Activated CD4-positive, alpha-beta T cell treated with anti-CD3 and anti-CD28 coated beads, Interleukin-2, amount 10 ng/mL, durations not matched to agents 24 days and 14 days (primary cell): ENCODE measurements at regions of chrX and their contacts with region 1.

Region 1: DNA sequence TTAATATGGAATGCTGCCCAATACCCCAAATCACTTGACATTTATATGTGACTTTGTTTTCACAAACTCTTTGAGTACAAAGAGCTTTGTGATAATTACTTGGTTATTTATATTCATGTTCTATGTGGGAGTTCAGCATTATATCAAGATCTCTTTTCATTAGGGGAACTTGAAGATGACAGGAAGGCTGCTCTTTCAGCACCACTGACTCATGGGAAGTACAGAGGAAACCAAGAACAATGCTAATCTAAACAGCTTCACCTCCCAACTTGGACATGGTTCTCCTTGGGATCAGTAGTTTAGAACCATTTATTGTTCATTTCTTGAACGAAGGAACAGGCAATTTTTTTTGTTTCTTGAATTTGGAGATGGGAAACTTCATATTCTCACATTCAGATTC is 184.0 kb upstream of the AFF2 start:
- DNase-seq: no peak
- H3K4me3 Mint-ChIP-seq: no peak overlapping the region
- H3K27ac Mint-ChIP-seq: no peak overlapping the region
- H3K4me1 Mint-ChIP-seq: peaks cover 6% of the 10 kb centered on the region
- H3K27me3 Mint-ChIP-seq: no peaks in the 10 kb centered on the region

Region 2: GRCh38 chrX:148333989-148334388 is 17.5 kb after region 1 on chrX:
- intact Hi-C with region 1: loop called (anchors 1 kb)
- DNase-seq: peak; percentile 67
- H3K4me3 Mint-ChIP-seq: no peak overlapping the region
- H3K27ac Mint-ChIP-seq: peak overlapping the region; percentile 34
- H3K4me1 Mint-ChIP-seq: peaks cover 13% of the 10 kb centered on the region
- H3K27me3 Mint-ChIP-seq: no peaks in the 10 kb centered on the region